Sigmoid colon (tissue), 7 donors: ENCODE measurements at regions of chr17 and their contacts with region 1.

Region 1: DNA sequence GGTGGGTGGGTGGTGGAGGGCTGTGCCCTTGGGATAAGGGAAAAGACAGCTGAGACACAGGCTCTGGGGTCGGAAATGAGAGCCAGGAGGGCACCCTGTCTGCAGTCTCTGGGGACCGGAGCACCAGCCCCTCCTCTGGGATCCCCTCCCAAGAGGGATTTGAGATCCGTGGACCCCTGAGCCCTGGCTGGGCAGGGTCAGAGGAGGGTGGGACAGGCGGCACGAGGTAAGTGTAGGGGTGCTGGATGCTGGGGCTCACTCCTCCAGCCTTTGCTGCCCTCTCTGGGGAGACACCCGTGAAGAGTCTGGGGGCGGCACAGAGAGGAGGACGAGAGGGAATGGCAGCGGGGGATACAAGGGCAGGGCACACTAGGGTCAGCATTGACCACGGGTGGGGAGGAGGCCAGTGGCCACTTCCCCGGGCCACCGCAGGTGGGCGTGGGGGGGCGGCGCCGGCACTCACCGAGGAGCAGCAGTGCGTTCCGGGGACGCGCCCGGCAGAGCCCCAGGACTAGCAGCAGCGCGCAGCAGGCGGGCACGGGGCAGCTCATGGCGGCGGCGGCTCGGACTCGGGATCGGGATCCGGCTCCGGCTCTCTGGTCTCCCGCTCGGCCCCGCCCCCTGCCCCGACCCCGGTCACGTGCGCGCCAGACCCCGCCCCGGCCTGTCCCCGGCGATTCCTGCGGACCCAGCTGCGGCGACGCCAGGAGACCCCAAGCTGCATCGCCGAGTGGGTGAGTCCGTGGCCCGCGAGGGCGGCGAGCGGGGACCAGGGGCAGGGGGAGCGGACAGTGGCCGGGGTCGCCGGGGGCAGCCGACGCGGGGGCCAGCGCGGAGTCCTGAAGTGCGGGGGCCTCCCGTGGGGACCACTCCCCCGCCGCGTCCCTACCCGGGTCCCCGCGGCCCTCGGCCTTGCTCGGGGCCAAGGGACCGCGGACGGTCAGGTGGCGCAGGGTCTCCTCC is at the starts of genes SGSH and SLC26A11:
- DNase-seq: peak; percentile 93
- H3K4me3 ChIP-seq: peak within 1 kb of the TSS; percentile 83 to 100 (median 96)
- H3K27ac ChIP-seq: peak within 1 kb of the TSS; percentile 79 to 89 (median 88)
- H3K4me1 ChIP-seq: peaks cover 0 to 26% (median 21%) of the 10 kb centered on the region in 4 donors
- H3K27me3 ChIP-seq: no peaks in the 10 kb centered on the region
- CTCF ChIP-seq: no peak
- EP300 ChIP-seq: no peak
- POLR2A ChIP-seq: no peak
- total RNA-seq, gene SGSH: 11.4 to 31.6 (median 12.9) TPM
- total RNA-seq, gene SLC26A11: 6.8 to 14.5 (median 11.5) TPM

Region 2: GRCh38 chr17:80252607-80253289 is 32.7 kb after region 1 on chr17:
- intact Hi-C with region 1: no loop called
- DNase-seq: no peak
- H3K4me3 ChIP-seq: no peak overlapping the region
- H3K27ac ChIP-seq: no peak overlapping the region
- H3K4me1 ChIP-seq: peaks cover 0 to 16% (median 11%) of the 10 kb centered on the region in 4 donors
- H3K27me3 ChIP-seq: no peaks in the 10 kb centered on the region
- CTCF ChIP-seq: peak in 1 of 4 experiments; percentile 15
- EP300 ChIP-seq: no peak
- POLR2A ChIP-seq: no peak

Region 3: DNA sequence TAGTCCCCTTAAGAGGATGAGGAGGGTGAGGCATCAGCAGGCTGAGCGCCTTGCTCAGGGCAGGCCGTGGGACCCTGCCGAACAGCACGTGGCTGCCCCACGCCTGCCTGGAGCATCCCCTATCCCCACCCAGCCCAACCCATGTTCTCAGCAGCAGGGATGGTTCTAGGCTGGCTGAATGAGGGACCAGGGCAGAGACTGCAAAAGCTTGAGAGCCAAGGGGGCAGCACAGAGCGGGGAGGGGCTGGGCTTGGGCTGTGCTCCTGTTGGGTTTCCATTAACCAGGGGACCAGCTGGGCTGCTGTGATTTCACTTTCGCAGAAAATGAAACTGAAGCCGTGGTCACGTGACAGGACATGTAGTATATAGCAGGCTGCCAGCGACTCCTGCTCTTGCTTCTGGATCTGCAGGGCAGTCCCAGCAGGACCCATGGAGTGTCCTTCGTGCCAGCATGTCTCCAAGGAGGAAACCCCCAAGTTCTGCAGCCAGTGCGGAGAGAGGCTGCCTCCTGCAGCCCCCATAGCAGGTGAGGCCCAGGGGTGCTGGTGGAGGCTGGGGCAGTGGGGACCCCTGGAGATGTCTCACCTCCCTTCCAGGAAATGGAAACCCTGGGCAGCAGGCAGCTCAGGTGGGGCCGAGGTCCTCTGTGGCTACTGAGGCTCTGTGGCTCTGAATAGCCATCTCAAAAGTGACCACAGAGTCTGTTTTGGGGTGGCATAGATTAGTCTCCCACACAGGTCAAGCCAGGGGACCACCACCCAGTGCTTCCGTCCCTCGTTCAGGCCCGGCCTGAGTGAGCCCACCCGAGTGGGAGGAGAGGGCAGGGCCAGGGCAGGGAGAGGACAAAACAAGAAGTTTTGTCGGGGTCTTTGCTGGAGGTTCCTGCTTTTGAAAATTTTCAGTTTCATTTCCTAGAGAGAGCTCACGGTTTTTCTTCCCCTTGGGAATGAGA is 43.5 kb after region 1 on chr17:
- intact Hi-C with region 1: loop called (anchors 5 kb)
- DNase-seq: peak; percentile 95
- H3K4me3 ChIP-seq: peak overlapping the region; percentile 18 to 42 (median 39)
- H3K27ac ChIP-seq: peak overlapping the region; percentile 94 to 100 (median 99)
- H3K4me1 ChIP-seq: peaks cover 0 to 41% (median 39%) of the 10 kb centered on the region in 4 donors
- H3K27me3 ChIP-seq: no peaks in the 10 kb centered on the region
- CTCF ChIP-seq: no peak
- EP300 ChIP-seq: no peak
- POLR2A ChIP-seq: no peak